ENCODE measurements at regions of chr2 and their contacts with region 1.

Region 1: GRCh38 chr2:99180755-99181623 is at the starts of genes MITD1 and MRPL30:
- DNase-seq: peak; percentile 85 to 93 (median 89)
- H3K4me3 ChIP-seq: peak within 1 kb of the TSS; percentile 99
- H3K4me3 Mint-ChIP-seq: peak within 1 kb of the TSS; percentile 94 to 100 (median 99)
- H3K27ac ChIP-seq: peak within 1 kb of the TSS; percentile 90
- H3K27ac Mint-ChIP-seq: peak within 1 kb of the TSS; percentile 89 to 100 (median 100)
- H3K4me1 ChIP-seq: peaks cover 52% of the 10 kb centered on the region
- H3K4me1 Mint-ChIP-seq: peaks cover 44 to 86% (median 75%) of the 10 kb centered on the region in 3 donors
- H3K27me3 ChIP-seq: no peaks in the 10 kb centered on the region
- H3K27me3 Mint-ChIP-seq: no peaks in the 10 kb centered on the region
- total RNA-seq, gene MITD1: 55.4 to 58.7 TPM
- total RNA-seq, gene MRPL30: 28.8 to 29.8 TPM

Region 2: GRCh38 chr2:99141110-99142108 is 39.6 kb before region 1 on chr2 and contains the start of gene C2orf15:
- CTCF ChIA-PET with region 1: no interaction called
- POLR2A ChIA-PET with region 1: interaction called, 12 read pairs
- DNase-seq: peak; percentile 96 to 98 (median 97)
- H3K4me3 ChIP-seq: peak within 1 kb of the TSS; percentile 100
- H3K4me3 Mint-ChIP-seq: peak within 1 kb of the TSS; percentile 92 to 99 (median 96)
- H3K27ac ChIP-seq: peak within 1 kb of the TSS; percentile 90
- H3K27ac Mint-ChIP-seq: peak within 1 kb of the TSS; percentile 83 to 99 (median 98)
- H3K4me1 ChIP-seq: peaks cover 14% of the 10 kb centered on the region
- H3K4me1 Mint-ChIP-seq: peaks cover 19 to 28% (median 24%) of the 10 kb centered on the region in 3 donors
- H3K27me3 ChIP-seq: no peaks in the 10 kb centered on the region
- H3K27me3 Mint-ChIP-seq: no peaks in the 10 kb centered on the region
- total RNA-seq, gene C2orf15: 0.86 to 0.92 TPM

Region 3: GRCh38 chr2:99624677-99625076 is 443.7 kb after region 1 on chr2:
- CTCF ChIA-PET with region 1: no interaction called
- POLR2A ChIA-PET with region 1: no interaction called
- DNase-seq: no peak
- H3K4me3 ChIP-seq: no peak overlapping the region
- H3K4me3 Mint-ChIP-seq: no peak overlapping the region
- H3K27ac ChIP-seq: no peak overlapping the region
- H3K27ac Mint-ChIP-seq: no peak overlapping the region
- H3K4me1 ChIP-seq: no peaks in the 10 kb centered on the region
- H3K4me1 Mint-ChIP-seq: no peaks in the 10 kb centered on the region
- H3K27me3 ChIP-seq: no peaks in the 10 kb centered on the region
- H3K27me3 Mint-ChIP-seq: peaks cover 5 to 6% of the 10 kb centered on the region in 2 donors

Measured in CD8-positive, alpha-beta memory T cell (primary cell).